Posterior vena cava (tissue), 2 donors: ENCODE measurements at regions of chr10 and their contacts with region 1.

Region 1: GRCh38 chr10:100683545-100684300 is 61.7 kb upstream of the PAX2 start:
- DNase-seq: peak; percentile 38

Region 2: GRCh38 chr10:100286051-100287033 is 397.4 kb before region 1 on chr10 and contains the start of gene BLOC1S2:
- intact Hi-C with region 1: no loop called
- DNase-seq: peak; percentile 96
- total RNA-seq, gene BLOC1S2: 23.6 to 24.6 TPM

Region 3: DNA sequence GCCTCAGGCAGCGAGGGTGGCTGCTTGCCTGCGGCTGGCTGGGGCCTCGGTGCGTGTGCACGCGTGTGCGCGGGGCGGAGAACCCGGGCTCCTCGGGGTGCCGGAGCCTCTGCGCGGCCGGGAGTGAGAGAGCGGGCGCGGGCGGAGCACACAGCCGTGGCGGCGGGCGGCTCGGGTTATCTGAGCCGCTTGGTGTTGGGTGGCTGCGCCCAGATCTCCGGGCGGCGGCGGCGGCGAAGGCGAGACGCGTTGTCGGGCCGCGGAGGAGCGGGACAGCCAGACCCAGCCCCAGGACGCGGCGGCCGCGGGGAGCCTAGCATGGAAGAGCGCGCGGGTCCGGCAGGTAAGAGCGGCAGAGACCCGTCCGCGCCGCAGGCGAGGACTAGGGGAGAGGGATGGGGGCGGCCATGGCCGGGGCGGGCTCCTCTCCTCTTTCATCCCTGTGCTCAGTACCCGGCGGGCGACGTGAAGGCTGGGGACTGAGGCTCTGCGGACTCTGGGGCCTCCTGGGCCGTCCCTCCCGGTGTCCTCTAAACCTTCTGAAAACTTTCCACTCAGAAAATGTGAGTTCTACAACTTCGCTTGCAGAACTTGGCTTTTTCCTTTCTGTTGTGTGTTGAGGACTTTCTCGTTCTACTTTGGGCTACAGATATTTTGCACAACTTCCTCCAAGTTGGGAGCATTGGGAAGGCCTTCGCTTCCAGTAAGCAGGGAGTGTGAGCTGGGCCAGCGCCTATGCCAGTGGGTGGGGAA is 51.8 kb after region 1 on chr10:
- intact Hi-C with region 1: loop called in 1 of 2 experiments (anchors 2 kb)
- DNase-seq: no peak